Gastrocnemius medialis (tissue), 4 donors: ENCODE measurements at regions of chr2 and their contacts with region 1.

Region 1: GRCh38 chr2:189500808-189501160 is 59.5 kb downstream of the WDR75 start:
- DNase-seq: no peak
- ATAC-seq: peak in 1 of 2 donors; percentile 3
- H3K4me3 ChIP-seq: peak overlapping the region; percentile 2 to 27 (median 20)
- H3K27ac ChIP-seq: peak overlapping the region; percentile 68 to 79 (median 76)
- H3K4me1 ChIP-seq: peaks cover 22 to 38% of the 10 kb centered on the region in 2 donors
- H3K27me3 ChIP-seq: no peaks in the 10 kb centered on the region
- CTCF ChIP-seq: no peak
- POLR2A ChIP-seq: no peak

Region 2: DNA sequence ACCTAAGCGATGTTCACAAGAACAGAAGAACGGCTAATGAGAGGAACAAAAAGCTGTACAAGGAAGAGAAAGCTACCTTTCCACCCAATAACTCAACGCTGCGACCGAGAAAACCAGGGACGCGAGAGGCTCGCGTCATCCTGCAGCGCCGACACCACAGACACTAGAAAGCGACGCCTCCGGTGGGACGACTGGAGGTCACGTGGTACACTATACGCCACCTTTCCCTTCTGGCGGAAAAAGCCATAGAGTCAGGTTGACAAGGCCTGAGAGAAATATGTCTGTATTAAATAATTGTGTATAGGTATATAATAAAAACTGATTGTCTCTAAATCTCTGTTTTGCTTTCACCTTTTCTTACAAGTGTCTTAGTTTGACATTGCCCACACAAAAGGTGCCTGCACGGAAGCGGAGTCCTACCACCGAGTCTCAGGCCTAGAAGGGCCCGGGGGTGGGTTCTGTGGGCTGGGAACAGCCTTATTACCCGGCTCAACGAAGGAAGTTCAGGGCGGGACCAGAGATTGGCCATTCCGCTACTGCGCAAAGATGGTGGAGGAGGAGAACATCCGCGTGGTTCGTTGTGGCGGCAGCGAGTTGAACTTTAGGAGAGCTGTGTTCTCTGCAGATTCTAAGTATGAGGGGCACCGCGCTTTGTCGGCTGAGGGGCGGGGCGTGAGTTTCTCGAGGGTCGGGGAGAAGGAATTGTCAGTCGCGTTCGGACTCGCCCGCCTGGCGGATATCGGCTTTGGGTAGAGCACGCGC is 59.7 kb before region 1 on chr2 and contains the start of gene WDR75:
- in situ Hi-C with region 1: no loop called
- intact Hi-C with region 1: loop called (anchors 1 kb)
- DNase-seq: peak; percentile 89 to 91
- ATAC-seq: peak; percentile 97 to 98
- H3K4me3 ChIP-seq: peak within 1 kb of the TSS; percentile 66 to 95 (median 75)
- H3K27ac ChIP-seq: peak within 1 kb of the TSS; percentile 89 to 92 (median 90)
- H3K4me1 ChIP-seq: peaks cover 23 to 25% of the 10 kb centered on the region in 2 donors
- H3K27me3 ChIP-seq: no peaks in the 10 kb centered on the region
- CTCF ChIP-seq: no peak
- POLR2A ChIP-seq: peak; percentile 63 to 72
- total RNA-seq, gene WDR75: 14.0 to 21.4 (median 16.7) TPM

Region 3: GRCh38 chr2:189549449-189549832 is 48.7 kb after region 1 on chr2:
- in situ Hi-C with region 1: no loop called
- intact Hi-C with region 1: loop called (anchors 5 kb)
- DNase-seq: no peak
- ATAC-seq: no peak
- H3K4me3 ChIP-seq: no peak overlapping the region
- H3K27ac ChIP-seq: peak overlapping the region; percentile 53 to 84 (median 60)
- H3K4me1 ChIP-seq: peaks cover 19 to 57% of the 10 kb centered on the region in 2 donors
- H3K27me3 ChIP-seq: no peaks in the 10 kb centered on the region
- CTCF ChIP-seq: no peak
- POLR2A ChIP-seq: no peak